ENCODE measurements at regions of chr12 and their contacts with region 1.

Region 1: GRCh38 chr12:54958048-54958658 is 26.4 kb downstream of the TESPA1 start:
- DNase-seq: peak; percentile 55
- H3K4me3 ChIP-seq: no peak overlapping the region
- H3K27ac ChIP-seq: no peak overlapping the region
- H3K4me1 ChIP-seq: no peaks in the 10 kb centered on the region
- H3K27me3 ChIP-seq: no peaks in the 10 kb centered on the region
- CTCF ChIP-seq: peak; percentile 57

Region 2: GRCh38 chr12:54749191-54749818 is 208.8 kb before region 1 on chr12:
- intact Hi-C with region 1: loop called (anchors 5 kb)
- DNase-seq: peak; percentile 26
- H3K4me3 ChIP-seq: no peak overlapping the region
- H3K27ac ChIP-seq: no peak overlapping the region
- H3K4me1 ChIP-seq: no peaks in the 10 kb centered on the region
- H3K27me3 ChIP-seq: no peaks in the 10 kb centered on the region
- CTCF ChIP-seq: peak; percentile 62

Region 3: DNA sequence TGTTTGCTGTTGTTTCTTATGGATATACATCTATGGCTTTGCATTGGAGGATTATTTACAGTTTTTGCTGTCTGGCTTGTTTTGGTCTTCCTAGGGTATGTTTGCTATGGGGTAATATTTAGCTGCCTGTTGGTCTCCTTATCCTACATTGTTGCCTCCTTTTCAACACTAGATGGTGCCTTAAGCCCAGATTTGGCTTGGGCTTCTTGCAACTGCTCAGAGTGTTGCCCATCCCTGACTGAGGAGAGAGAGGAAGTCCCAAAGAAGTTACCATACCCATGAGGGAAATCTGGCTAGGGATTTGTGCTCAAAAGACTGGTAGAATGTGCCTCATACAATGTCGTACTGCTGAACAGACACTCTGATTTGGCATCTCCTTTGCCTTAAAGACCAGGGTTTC is 198.4 kb before region 1 on chr12:
- intact Hi-C with region 1: loop called (anchors 5 kb)
- DNase-seq: no peak
- H3K4me3 ChIP-seq: no peak overlapping the region
- H3K27ac ChIP-seq: no peak overlapping the region
- H3K4me1 ChIP-seq: no peaks in the 10 kb centered on the region
- H3K27me3 ChIP-seq: no peaks in the 10 kb centered on the region
- CTCF ChIP-seq: no peak

Region 4: GRCh38 chr12:54853995-54854566 is 104.1 kb before region 1 on chr12 and contains the start of gene MUCL1:
- intact Hi-C with region 1: loop called (anchors 2 kb)
- DNase-seq: peak; percentile 68
- H3K4me3 ChIP-seq: no peak within 1 kb of the TSS
- H3K27ac ChIP-seq: no peak within 1 kb of the TSS
- H3K4me1 ChIP-seq: no peaks in the 10 kb centered on the region
- H3K27me3 ChIP-seq: no peaks in the 10 kb centered on the region
- CTCF ChIP-seq: peak; percentile 77
- total RNA-seq, gene MUCL1: not detected

Region 5: GRCh38 chr12:55019779-55020178 is 61.6 kb after region 1 on chr12 and contains the start of gene NEUROD4:
- intact Hi-C with region 1: no loop called
- DNase-seq: peak; percentile 20
- H3K4me3 ChIP-seq: no peak within 1 kb of the TSS
- H3K27ac ChIP-seq: no peak within 1 kb of the TSS
- H3K4me1 ChIP-seq: no peaks in the 10 kb centered on the region
- H3K27me3 ChIP-seq: no peaks in the 10 kb centered on the region
- CTCF ChIP-seq: no peak
- total RNA-seq, gene NEUROD4: not detected